Natural killer cell (primary cell): ENCODE measurements at regions of chr18 and their contacts with region 1.

Region 1: GRCh38 chr18:6521795-6522418 is 107.2 kb upstream of the L3MBTL4 start:
- DNase-seq: peak; percentile 4 to 35
- ATAC-seq: peak; percentile 37 to 64 (median 44)
- H3K4me3 ChIP-seq: no peak overlapping the region
- H3K4me3 Mint-ChIP-seq: no peak overlapping the region
- H3K27ac ChIP-seq: no peak overlapping the region
- H3K27ac Mint-ChIP-seq: no peak overlapping the region
- H3K4me1 ChIP-seq: no peaks in the 10 kb centered on the region
- H3K4me1 Mint-ChIP-seq: no peaks in the 10 kb centered on the region
- H3K27me3 ChIP-seq: no peaks in the 10 kb centered on the region
- H3K27me3 Mint-ChIP-seq: peaks cover 22 to 52% of the 10 kb centered on the region in 2 donors
- CTCF ChIP-seq: peak; percentile 96

Region 2: GRCh38 chr18:5073026-5073944 is 1448.6 kb before region 1 on chr18:
- intact Hi-C with region 1: loop called (anchors 2 kb)
- DNase-seq: peak in 1 of 2 donors; percentile 70
- ATAC-seq: no peak
- H3K4me3 ChIP-seq: no peak overlapping the region
- H3K4me3 Mint-ChIP-seq: no peak overlapping the region
- H3K27ac ChIP-seq: no peak overlapping the region
- H3K27ac Mint-ChIP-seq: no peak overlapping the region
- H3K4me1 ChIP-seq: no peaks in the 10 kb centered on the region
- H3K4me1 Mint-ChIP-seq: no peaks in the 10 kb centered on the region
- H3K27me3 ChIP-seq: no peaks in the 10 kb centered on the region
- H3K27me3 Mint-ChIP-seq: peaks cover 0 to 4% of the 10 kb centered on the region in 2 donors
- CTCF ChIP-seq: no peak

Region 3: DNA sequence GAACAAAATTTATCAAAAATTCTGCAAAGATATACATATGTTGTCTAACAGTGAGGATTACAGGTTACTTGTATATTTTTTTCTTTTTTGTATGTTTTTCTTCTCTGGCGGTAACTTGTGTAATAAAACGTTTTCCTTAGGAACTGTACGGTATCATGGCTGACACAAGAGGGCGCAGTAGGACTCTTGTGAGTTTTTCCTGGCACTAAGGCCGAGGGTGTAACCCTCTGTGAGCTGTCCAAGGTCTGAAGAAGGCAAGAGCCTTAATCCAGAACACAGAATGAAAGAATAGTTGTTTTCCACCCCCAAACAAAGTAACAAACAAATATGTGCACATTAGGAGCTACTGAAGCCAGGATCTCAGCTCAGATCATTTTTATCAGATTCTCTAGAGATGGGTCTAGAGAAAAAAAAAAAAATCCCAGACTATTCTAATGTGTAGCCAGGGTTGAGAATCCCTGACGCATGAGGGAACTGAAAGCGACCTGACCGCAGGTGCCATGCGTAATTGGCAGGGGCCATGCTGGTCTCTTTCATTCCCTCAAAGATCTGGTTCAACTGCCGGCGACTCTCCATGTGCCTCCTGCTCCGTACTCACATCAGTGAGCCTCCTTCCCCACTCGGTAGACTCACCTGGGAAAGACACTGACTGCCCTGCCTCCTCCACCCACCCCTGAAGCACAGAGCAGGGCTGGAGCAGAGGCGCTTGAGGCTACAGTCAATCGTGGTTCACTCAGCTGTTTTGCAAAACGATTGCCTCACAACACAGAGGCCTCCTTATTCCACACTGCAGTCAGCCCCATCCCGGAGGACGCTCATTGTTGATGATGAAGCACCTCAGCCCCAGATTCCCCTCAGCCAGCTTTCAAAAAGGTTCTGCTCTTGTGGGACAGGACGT is 653.4 kb before region 1 on chr18:
- intact Hi-C with region 1: loop called (anchors 1 kb)
- DNase-seq: peak in 1 of 2 donors; percentile 28
- ATAC-seq: peak; percentile 63 to 68 (median 67)
- H3K4me3 ChIP-seq: no peak overlapping the region
- H3K4me3 Mint-ChIP-seq: no peak overlapping the region
- H3K27ac ChIP-seq: no peak overlapping the region
- H3K27ac Mint-ChIP-seq: no peak overlapping the region
- H3K4me1 ChIP-seq: no peaks in the 10 kb centered on the region
- H3K4me1 Mint-ChIP-seq: no peaks in the 10 kb centered on the region
- H3K27me3 ChIP-seq: no peaks in the 10 kb centered on the region
- H3K27me3 Mint-ChIP-seq: peaks cover 0 to 4% of the 10 kb centered on the region in 2 donors
- CTCF ChIP-seq: peak; percentile 33

Region 4: GRCh38 chr18:5879479-5879882 is 642.4 kb before region 1 on chr18:
- intact Hi-C with region 1: loop called (anchors 1 kb)
- DNase-seq: peak in 1 of 2 donors; percentile 10
- ATAC-seq: peak in 1 of 3 donors; percentile 35
- H3K4me3 ChIP-seq: no peak overlapping the region
- H3K4me3 Mint-ChIP-seq: no peak overlapping the region
- H3K27ac ChIP-seq: no peak overlapping the region
- H3K27ac Mint-ChIP-seq: no peak overlapping the region
- H3K4me1 ChIP-seq: no peaks in the 10 kb centered on the region
- H3K4me1 Mint-ChIP-seq: no peaks in the 10 kb centered on the region
- H3K27me3 ChIP-seq: peaks cover 2% of the 10 kb centered on the region
- H3K27me3 Mint-ChIP-seq: peaks cover 12 to 35% of the 10 kb centered on the region in 2 donors
- CTCF ChIP-seq: peak; percentile 89

Region 5: GRCh38 chr18:6315517-6316331 is 206.2 kb before region 1 on chr18:
- intact Hi-C with region 1: no loop called
- DNase-seq: no peak
- ATAC-seq: peak in 2 of 3 donors; percentile 37 to 47
- H3K4me3 ChIP-seq: no peak overlapping the region
- H3K4me3 Mint-ChIP-seq: no peak overlapping the region
- H3K27ac ChIP-seq: no peak overlapping the region
- H3K27ac Mint-ChIP-seq: no peak overlapping the region
- H3K4me1 ChIP-seq: no peaks in the 10 kb centered on the region
- H3K4me1 Mint-ChIP-seq: peaks cover 30 to 34% of the 10 kb centered on the region in 2 donors
- H3K27me3 ChIP-seq: no peaks in the 10 kb centered on the region
- H3K27me3 Mint-ChIP-seq: no peaks in the 10 kb centered on the region
- CTCF ChIP-seq: no peak

Region 6: GRCh38 chr18:6465281-6465680 is 56.6 kb before region 1 on chr18:
- intact Hi-C with region 1: no loop called
- DNase-seq: no peak
- ATAC-seq: no peak
- H3K4me3 ChIP-seq: no peak overlapping the region
- H3K4me3 Mint-ChIP-seq: no peak overlapping the region
- H3K27ac ChIP-seq: no peak overlapping the region
- H3K27ac Mint-ChIP-seq: no peak overlapping the region
- H3K4me1 ChIP-seq: no peaks in the 10 kb centered on the region
- H3K4me1 Mint-ChIP-seq: no peaks in the 10 kb centered on the region
- H3K27me3 ChIP-seq: peaks cover 2% of the 10 kb centered on the region
- H3K27me3 Mint-ChIP-seq: peaks cover 20 to 42% of the 10 kb centered on the region in 2 donors
- CTCF ChIP-seq: no peak

Region 7: GRCh38 chr18:6543330-6543908 is 21.5 kb after region 1 on chr18:
- intact Hi-C with region 1: no loop called
- DNase-seq: no peak
- ATAC-seq: no peak
- H3K4me3 ChIP-seq: no peak overlapping the region
- H3K4me3 Mint-ChIP-seq: no peak overlapping the region
- H3K27ac ChIP-seq: no peak overlapping the region
- H3K27ac Mint-ChIP-seq: no peak overlapping the region
- H3K4me1 ChIP-seq: no peaks in the 10 kb centered on the region
- H3K4me1 Mint-ChIP-seq: no peaks in the 10 kb centered on the region
- H3K27me3 ChIP-seq: no peaks in the 10 kb centered on the region
- H3K27me3 Mint-ChIP-seq: peaks cover 0 to 10% of the 10 kb centered on the region in 2 donors
- CTCF ChIP-seq: peak; percentile 24

Region 8: GRCh38 chr18:6591491-6591890 is 69.6 kb after region 1 on chr18:
- intact Hi-C with region 1: no loop called
- DNase-seq: no peak
- ATAC-seq: no peak
- H3K4me3 ChIP-seq: no peak overlapping the region
- H3K4me3 Mint-ChIP-seq: no peak overlapping the region
- H3K27ac ChIP-seq: no peak overlapping the region
- H3K27ac Mint-ChIP-seq: no peak overlapping the region
- H3K4me1 ChIP-seq: no peaks in the 10 kb centered on the region
- H3K4me1 Mint-ChIP-seq: no peaks in the 10 kb centered on the region
- H3K27me3 ChIP-seq: no peaks in the 10 kb centered on the region
- H3K27me3 Mint-ChIP-seq: peaks cover 0 to 3% of the 10 kb centered on the region in 2 donors
- CTCF ChIP-seq: no peak